ENCODE measurements at regions of chrX and their contacts with region 1.

Region 1: GRCh38 chrX:13750204-13750603 is 15.7 kb downstream of the OFD1 start:
- DNase-seq: peak in 7 of 9 donors; percentile 23 to 52 (median 38)
- ATAC-seq: peak; percentile 68
- H3K4me3 ChIP-seq: no peak overlapping the region
- H3K4me3 Mint-ChIP-seq: no peak overlapping the region
- H3K27ac ChIP-seq: no peak overlapping the region
- H3K27ac Mint-ChIP-seq: peak overlapping the region in 5 of 9 donors; percentile 33 to 74 (median 42)
- H3K4me1 ChIP-seq: peaks cover 4 to 7% of the 10 kb centered on the region in 2 donors
- H3K4me1 Mint-ChIP-seq: peaks cover 6 to 32% (median 14%) of the 10 kb centered on the region in 7 donors
- H3K27me3 ChIP-seq: no peaks in the 10 kb centered on the region
- H3K27me3 Mint-ChIP-seq: no peaks in the 10 kb centered on the region

Region 2: GRCh38 chrX:13506574-13506973 is 243.6 kb before region 1 on chrX:
- CTCF ChIA-PET with region 1: interaction called, 3 read pairs
- POLR2A ChIA-PET with region 1: no interaction called
- intact Hi-C with region 1: loop called in 1 of 2 experiments (anchors 1 kb)
- DNase-seq: peak in 8 of 9 donors; percentile 10 to 47 (median 32)
- ATAC-seq: no peak
- H3K4me3 ChIP-seq: no peak overlapping the region
- H3K4me3 Mint-ChIP-seq: no peak overlapping the region
- H3K27ac ChIP-seq: no peak overlapping the region
- H3K27ac Mint-ChIP-seq: peak overlapping the region in 1 of 9 donors; percentile 15
- H3K4me1 ChIP-seq: no peaks in the 10 kb centered on the region
- H3K4me1 Mint-ChIP-seq: peaks cover 0 to 8% (median 2%) of the 10 kb centered on the region in 7 donors
- H3K27me3 ChIP-seq: no peaks in the 10 kb centered on the region
- H3K27me3 Mint-ChIP-seq: no peaks in the 10 kb centered on the region

Region 3: GRCh38 chrX:13658602-13659001 is 91.6 kb before region 1 on chrX:
- CTCF ChIA-PET with region 1: interaction called, 8 read pairs
- POLR2A ChIA-PET with region 1: interaction called, 3 read pairs
- intact Hi-C with region 1: loop called (anchors 1 kb)
- DNase-seq: peak in 7 of 9 donors; percentile 36 to 69 (median 63)
- ATAC-seq: peak; percentile 71
- H3K4me3 ChIP-seq: no peak overlapping the region
- H3K4me3 Mint-ChIP-seq: peak overlapping the region in 1 of 10 donors; percentile 12
- H3K27ac ChIP-seq: peak overlapping the region; percentile 56
- H3K27ac Mint-ChIP-seq: peak overlapping the region in 8 of 9 donors; percentile 43 to 88 (median 78)
- H3K4me1 ChIP-seq: peaks cover 9 to 10% of the 10 kb centered on the region in 2 donors
- H3K4me1 Mint-ChIP-seq: peaks cover 0 to 34% (median 23%) of the 10 kb centered on the region in 7 donors
- H3K27me3 ChIP-seq: no peaks in the 10 kb centered on the region
- H3K27me3 Mint-ChIP-seq: no peaks in the 10 kb centered on the region

Region 4: DNA sequence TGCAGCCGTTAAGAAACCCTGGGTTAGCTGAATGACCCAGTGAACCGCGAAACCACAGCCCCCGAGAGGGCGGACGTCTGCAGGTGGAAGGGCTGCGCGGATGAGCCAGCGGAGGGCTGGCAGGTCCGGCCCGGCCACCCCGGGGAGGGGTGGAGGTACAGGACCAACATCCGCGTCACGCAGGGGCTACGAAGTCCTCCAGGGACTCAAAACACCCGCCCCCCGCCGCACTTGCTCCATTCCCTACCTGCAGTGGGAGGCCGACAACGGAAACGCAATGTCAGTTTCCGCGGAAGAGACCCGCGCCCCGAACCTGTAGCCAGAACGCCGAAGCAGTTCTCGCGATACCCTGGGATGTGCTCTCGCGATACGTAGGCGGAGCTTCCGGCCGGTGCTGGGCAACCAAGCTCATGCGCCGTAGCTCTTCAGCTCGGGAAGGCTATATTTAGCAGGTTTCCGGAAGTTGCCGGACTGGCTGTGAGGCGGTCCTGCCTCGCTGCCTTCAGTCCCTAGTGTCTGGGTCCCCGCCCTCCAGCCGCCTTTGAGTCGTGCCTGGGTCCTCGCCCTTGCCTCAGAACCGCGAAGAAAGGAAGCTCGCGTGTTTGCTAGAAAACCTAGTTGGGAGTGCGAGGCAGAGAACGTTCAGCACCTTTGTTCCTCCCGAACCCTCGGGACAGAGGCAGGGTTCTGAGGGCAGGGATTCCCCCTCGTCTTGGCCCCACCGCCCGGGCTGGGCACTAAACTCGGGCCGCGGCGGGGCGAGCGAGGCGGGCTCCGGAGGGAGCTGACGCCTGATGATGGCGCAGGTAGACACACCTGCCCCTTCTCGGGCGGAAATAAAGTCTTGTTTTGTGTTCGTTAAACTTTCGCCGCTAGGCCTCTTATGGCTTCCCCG is 15.7 kb before region 1 on chrX and contains the starts of genes OFD1 and TRAPPC2:
- CTCF ChIA-PET with region 1: no interaction called
- POLR2A ChIA-PET with region 1: interaction called, 18 read pairs
- intact Hi-C with region 1: loop called (anchors 2 kb)
- DNase-seq: peak; percentile 76 to 92 (median 87)
- ATAC-seq: peak; percentile 94
- H3K4me3 ChIP-seq: peak within 1 kb of the TSS; percentile 85
- H3K4me3 Mint-ChIP-seq: peak within 1 kb of the TSS; percentile 82 to 99 (median 94)
- H3K27ac ChIP-seq: peak within 1 kb of the TSS; percentile 99
- H3K27ac Mint-ChIP-seq: peak within 1 kb of the TSS; percentile 95 to 99 (median 97)
- H3K4me1 ChIP-seq: peaks cover 12 to 20% of the 10 kb centered on the region in 2 donors
- H3K4me1 Mint-ChIP-seq: peaks cover 21 to 66% (median 58%) of the 10 kb centered on the region in 7 donors
- H3K27me3 ChIP-seq: no peaks in the 10 kb centered on the region
- H3K27me3 Mint-ChIP-seq: no peaks in the 10 kb centered on the region
- total RNA-seq, gene OFD1: 30.4 to 142 (median 72.5) TPM
- total RNA-seq, gene TRAPPC2: 20.7 to 31.1 (median 23.5) TPM

Region 5: DNA sequence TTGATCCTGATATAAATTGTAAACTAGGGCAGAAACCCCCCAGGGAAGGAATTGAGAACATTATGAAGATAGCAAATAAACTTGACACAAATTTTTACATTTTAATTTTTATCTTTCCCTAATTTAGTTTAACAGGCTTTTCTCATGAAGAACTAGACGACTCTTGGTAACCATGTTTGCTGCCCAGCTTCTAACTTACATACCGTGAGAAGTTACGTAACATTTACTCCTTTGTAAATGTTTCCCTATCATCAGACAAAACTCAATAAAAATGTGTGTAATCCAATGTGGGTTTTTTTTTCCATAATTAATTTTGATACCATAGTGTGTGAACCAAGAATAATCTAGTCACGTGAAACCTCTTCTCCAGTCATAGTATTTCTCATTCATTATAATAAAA is 18.7 kb after region 1 on chrX:
- CTCF ChIA-PET with region 1: no interaction called
- POLR2A ChIA-PET with region 1: no interaction called
- intact Hi-C with region 1: no loop called
- DNase-seq: no peak
- ATAC-seq: no peak
- H3K4me3 ChIP-seq: no peak overlapping the region
- H3K4me3 Mint-ChIP-seq: no peak overlapping the region
- H3K27ac ChIP-seq: no peak overlapping the region
- H3K27ac Mint-ChIP-seq: no peak overlapping the region
- H3K4me1 ChIP-seq: no peaks in the 10 kb centered on the region
- H3K4me1 Mint-ChIP-seq: peaks cover 0 to 28% (median 11%) of the 10 kb centered on the region in 7 donors
- H3K27me3 ChIP-seq: no peaks in the 10 kb centered on the region
- H3K27me3 Mint-ChIP-seq: no peaks in the 10 kb centered on the region

Measured in naive thymus-derived CD4-positive, alpha-beta T cell (primary cell).